Posterior cingulate gyrus (tissue), 11 donors: ENCODE measurements at regions of chr15 and their contacts with region 1.

Region 1: GRCh38 chr15:56869573-56869972 is 48.9 kb upstream of the TCF12 start:
- DNase-seq: peak in 7 of 10 donors; percentile 48 to 89 (median 56)

Region 2: DNA sequence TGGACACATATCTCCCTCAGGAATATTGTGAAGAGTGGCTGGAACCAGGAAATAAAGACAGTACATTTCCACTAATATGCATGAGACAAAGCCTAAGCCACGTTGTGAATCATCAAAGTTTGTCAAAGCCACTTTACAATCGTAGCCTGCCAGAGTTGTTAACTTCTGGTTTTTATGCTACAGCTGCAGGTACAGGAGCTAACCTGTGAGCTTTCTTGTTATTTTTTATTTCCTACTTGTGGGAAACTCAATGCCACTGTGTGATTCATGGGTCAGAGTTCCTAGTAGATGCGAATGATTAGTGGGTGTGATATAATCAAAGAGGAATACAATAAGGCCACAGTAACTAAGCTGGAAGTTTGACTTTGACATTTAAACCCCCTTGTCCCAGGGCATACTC is 548.7 kb before region 1 on chr15:
- intact Hi-C with region 1: no loop called
- DNase-seq: no peak

Region 3: GRCh38 chr15:56496635-56497034 is 372.9 kb before region 1 on chr15:
- intact Hi-C with region 1: loop called (anchors 5 kb)
- DNase-seq: no peak

Region 4: GRCh38 chr15:56821721-56822425 is 47.7 kb before region 1 on chr15:
- intact Hi-C with region 1: loop called (anchors 5 kb)
- DNase-seq: peak in 8 of 10 donors; percentile 25 to 93 (median 62)

Region 5: GRCh38 chr15:56835718-56836171 is 33.8 kb before region 1 on chr15:
- intact Hi-C with region 1: no loop called
- DNase-seq: peak in 2 of 10 donors; percentile 7 to 39

Region 6: GRCh38 chr15:56929399-56929798 is 59.8 kb after region 1 on chr15:
- intact Hi-C with region 1: no loop called
- DNase-seq: no peak

Region 7: GRCh38 chr15:57213862-57214261 is 344.3 kb after region 1 on chr15:
- intact Hi-C with region 1: no loop called
- DNase-seq: no peak